HCT116 (cell line): ENCODE measurements at regions of chr3 and their contacts with region 1.

Region 1: GRCh38 chr3:57397175-57398026 is 104.9 kb upstream of the ASB14 start:
- DNase-seq: peak; percentile 59
- ATAC-seq: peak; percentile 100
- H3K4me3 ChIP-seq: 0 out of 4 replicates have a peak overlapping the region, but pooled peaks of 1 of the 2 experiments have one; percentile 7
- H3K27ac ChIP-seq: no peak overlapping the region
- H3K4me1 ChIP-seq: peaks cover 0 to 7% of the 10 kb centered on the region in 2 experiments; a peak in 1 of 4 replicates
- H3K27me3 ChIP-seq: no peaks in the 10 kb centered on the region
- CTCF ChIP-seq: peak; percentile 70 to 96 (median 94)
- POLR2A ChIP-seq: no peak
- RAD21 ChIP-seq: peak; percentile 92

Region 2: GRCh38 chr3:57199895-57200297 is 197.5 kb before region 1 on chr3 and contains the start of gene HESX1:
- CTCF ChIA-PET with region 1: no interaction called
- POLR2A ChIA-PET with region 1: no interaction called
- RAD21 ChIA-PET with region 1: no interaction called
- intact Hi-C with region 1: no loop called
- DNase-seq: no peak
- ATAC-seq: no peak
- H3K4me3 ChIP-seq: no peak within 1 kb of the TSS
- H3K27ac ChIP-seq: no peak within 1 kb of the TSS
- H3K4me1 ChIP-seq: no peaks in the 10 kb centered on the region
- H3K27me3 ChIP-seq: no peaks in the 10 kb centered on the region
- CTCF ChIP-seq: no peak
- POLR2A ChIP-seq: no peak
- RAD21 ChIP-seq: no peak
- total RNA-seq, gene HESX1: 2.1 TPM

Region 3: GRCh38 chr3:57385498-57385897 is 11.9 kb before region 1 on chr3:
- CTCF ChIA-PET with region 1: interaction called, 14 read pairs
- POLR2A ChIA-PET with region 1: interaction called, 4 read pairs
- RAD21 ChIA-PET with region 1: no interaction called
- intact Hi-C with region 1: no loop called
- DNase-seq: no peak
- ATAC-seq: no peak
- H3K4me3 ChIP-seq: no peak overlapping the region
- H3K27ac ChIP-seq: no peak overlapping the region
- H3K4me1 ChIP-seq: no peaks in the 10 kb centered on the region
- H3K27me3 ChIP-seq: no peaks in the 10 kb centered on the region
- CTCF ChIP-seq: no peak
- POLR2A ChIP-seq: no peak
- RAD21 ChIP-seq: no peak

Region 4: GRCh38 chr3:57434041-57434440 is 36.6 kb after region 1 on chr3:
- CTCF ChIA-PET with region 1: interaction called, 12 read pairs
- POLR2A ChIA-PET with region 1: no interaction called
- RAD21 ChIA-PET with region 1: interaction called, 3 to 4 read pairs
- intact Hi-C with region 1: loop called (anchors 1 kb)
- DNase-seq: peak; percentile 62
- ATAC-seq: peak; percentile 96
- H3K4me3 ChIP-seq: no peak overlapping the region
- H3K27ac ChIP-seq: no peak overlapping the region
- H3K4me1 ChIP-seq: no peaks in the 10 kb centered on the region
- H3K27me3 ChIP-seq: no peaks in the 10 kb centered on the region
- CTCF ChIP-seq: peak; percentile 53 to 64 (median 63); a peak in 5 of 6 replicates
- POLR2A ChIP-seq: no peak
- RAD21 ChIP-seq: peak; percentile 70

Region 5: GRCh38 chr3:57582474-57583168 is 185.2 kb after region 1 on chr3:
- CTCF ChIA-PET with region 1: interaction called, 3 read pairs
- POLR2A ChIA-PET with region 1: no interaction called
- RAD21 ChIA-PET with region 1: no interaction called
- intact Hi-C with region 1: loop called (anchors 1 kb)
- DNase-seq: peak; percentile 24
- ATAC-seq: peak; percentile 82
- H3K4me3 ChIP-seq: no peak overlapping the region
- H3K27ac ChIP-seq: no peak overlapping the region
- H3K4me1 ChIP-seq: peaks cover 0 to 5% of the 10 kb centered on the region in 2 experiments; a peak in 1 of 4 replicates
- H3K27me3 ChIP-seq: no peaks in the 10 kb centered on the region
- CTCF ChIP-seq: peak; percentile 14 to 60 (median 54); a peak in 4 of 6 replicates
- POLR2A ChIP-seq: no peak
- RAD21 ChIP-seq: peak; percentile 44